Heart right ventricle (tissue), 16 donors: ENCODE measurements at regions of chr11 and their contacts with region 1.

Region 1: DNA sequence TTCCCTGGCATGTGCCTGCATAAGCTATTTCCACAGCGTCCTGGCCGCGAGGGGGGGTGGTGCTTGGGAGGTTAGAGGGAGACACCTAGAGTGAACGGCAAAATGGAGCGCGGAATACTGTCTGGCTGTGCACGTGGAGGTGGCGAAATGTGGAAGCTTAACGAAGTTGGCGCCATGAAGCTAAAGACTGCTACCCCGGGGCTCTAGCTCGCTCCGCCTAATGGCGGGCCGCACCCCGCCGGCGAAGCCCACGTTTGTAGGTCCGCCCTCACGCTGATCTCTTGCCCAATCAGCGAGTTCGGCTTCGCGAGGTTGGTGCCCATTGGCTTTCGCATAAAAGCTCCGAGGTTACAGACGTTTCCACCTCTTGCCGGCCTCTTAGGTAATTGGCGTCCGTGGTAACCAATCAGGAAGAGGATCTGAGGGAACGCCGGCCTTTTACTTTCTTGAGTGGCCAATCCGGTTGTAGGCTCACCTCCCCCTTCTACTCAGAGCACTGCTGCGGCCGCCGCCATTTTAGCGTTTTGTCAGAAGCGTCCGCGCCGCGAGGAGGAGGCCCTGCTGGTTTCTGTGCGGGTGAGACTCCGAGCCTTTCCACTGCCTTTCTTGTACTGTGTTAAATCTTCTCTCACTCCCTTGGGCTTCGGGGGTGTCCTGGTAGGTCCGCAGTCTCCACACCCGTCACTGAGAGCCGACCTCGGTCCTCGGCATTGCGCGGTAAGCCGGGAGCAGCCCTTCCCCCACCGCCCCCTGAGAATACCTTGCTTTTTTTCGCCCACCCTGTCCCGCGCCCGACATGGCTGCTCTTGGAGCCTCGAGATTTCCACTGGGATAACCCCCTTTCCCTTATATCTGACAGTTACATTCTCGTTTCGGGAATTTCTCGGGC is at the start of gene RBM4:
- DNase-seq: peak; percentile 93 to 100
- ATAC-seq: peak; percentile 95 to 100 (median 98)
- H3K4me3 ChIP-seq: peak within 1 kb of the TSS; percentile 53 to 93 (median 78)
- H3K27ac ChIP-seq: peak within 1 kb of the TSS; percentile 64 to 94 (median 89)
- H3K4me1 ChIP-seq: peaks cover 14 to 68% (median 52%) of the 10 kb centered on the region in 9 donors
- H3K27me3 ChIP-seq: no peaks in the 10 kb centered on the region
- CTCF ChIP-seq: peak in 4 of 9 donors; percentile 3 to 44 (median 12)
- total RNA-seq, gene RBM4: 49.3 to 77.0 (median 55.3) TPM

Region 2: GRCh38 chr11:66592457-66593302 is 45.7 kb before region 1 on chr11 and contains the starts of genes CCDC87 and CCS:
- intact Hi-C with region 1: loop called in 2 of 10 experiments (anchors 2 kb)
- DNase-seq: peak; percentile 98 to 99
- ATAC-seq: peak; percentile 97 to 99 (median 98)
- H3K4me3 ChIP-seq: peak within 1 kb of the TSS; percentile 36 to 85 (median 66)
- H3K27ac ChIP-seq: peak within 1 kb of the TSS in 9 of 10 donors; percentile 68 to 93 (median 84)
- H3K4me1 ChIP-seq: peaks cover 3 to 43% (median 32%) of the 10 kb centered on the region in 9 donors
- H3K27me3 ChIP-seq: no peaks in the 10 kb centered on the region
- CTCF ChIP-seq: peak; percentile 37 to 91 (median 69)
- total RNA-seq, gene CCDC87: 0.17 to 0.66 (median 0.37) TPM
- total RNA-seq, gene CCS: 15.9 to 29.3 (median 20.2) TPM

Region 3: DNA sequence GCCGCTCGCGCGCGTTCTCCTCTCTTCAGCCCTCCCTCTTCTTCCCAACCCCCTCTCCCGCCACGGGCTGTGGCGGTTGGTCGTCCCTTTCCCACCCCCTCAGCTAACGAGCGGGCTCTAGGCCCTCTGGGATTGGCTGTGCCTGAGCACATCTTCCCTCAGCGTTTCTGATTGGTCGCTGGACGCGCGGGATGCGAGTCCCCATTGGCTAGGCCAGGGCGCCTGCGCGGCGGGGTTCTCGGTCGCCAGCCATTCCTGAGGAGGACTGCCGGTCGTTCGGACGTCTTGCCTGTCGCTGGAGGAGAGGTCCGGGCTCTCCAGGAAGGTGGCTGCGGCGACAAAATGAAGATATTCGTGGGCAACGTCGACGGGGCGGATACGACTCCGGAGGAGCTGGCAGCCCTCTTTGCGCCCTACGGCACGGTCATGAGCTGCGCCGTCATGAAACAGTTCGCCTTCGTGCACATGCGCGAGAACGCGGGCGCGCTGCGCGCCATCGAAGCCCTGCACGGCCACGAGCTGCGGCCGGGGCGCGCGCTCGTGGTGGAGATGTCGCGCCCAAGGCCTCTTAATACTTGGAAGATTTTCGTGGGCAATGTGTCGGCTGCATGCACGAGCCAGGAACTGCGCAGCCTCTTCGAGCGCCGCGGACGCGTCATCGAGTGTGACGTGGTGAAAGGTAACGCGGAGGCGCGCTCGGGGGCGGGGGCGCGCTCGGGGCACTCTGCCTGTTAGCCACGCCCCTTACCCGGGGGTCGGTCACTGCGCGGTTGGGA is 21.9 kb before region 1 on chr11 and contains the start of gene RBM14:
- intact Hi-C with region 1: loop called in 2 of 10 experiments (anchors 2 kb)
- DNase-seq: peak; percentile 99
- ATAC-seq: peak; percentile 94 to 98 (median 97)
- H3K4me3 ChIP-seq: peak within 1 kb of the TSS; percentile 56 to 94 (median 82)
- H3K27ac ChIP-seq: peak within 1 kb of the TSS; percentile 79 to 96 (median 94)
- H3K4me1 ChIP-seq: peaks cover 7 to 54% (median 46%) of the 10 kb centered on the region in 9 donors
- H3K27me3 ChIP-seq: no peaks in the 10 kb centered on the region
- CTCF ChIP-seq: no peak
- total RNA-seq, gene RBM14: 22.4 to 34.3 (median 28.3) TPM